ENCODE measurements at regions of chr5 and their contacts with region 1.

Region 1: GRCh38 chr5:141564216-141564692 is 54.5 kb downstream of the DIAPH1 start:
- DNase-seq: peak; percentile 91 to 94 (median 93)
- H3K4me3 ChIP-seq: no peak overlapping the region
- H3K4me3 Mint-ChIP-seq: no peak overlapping the region
- H3K27ac ChIP-seq: peak overlapping the region in 1 of 2 donors; percentile 55
- H3K27ac Mint-ChIP-seq: peak overlapping the region; percentile 37 to 90 (median 84)
- H3K4me1 ChIP-seq: peaks cover 0 to 10% of the 10 kb centered on the region in 2 donors
- H3K4me1 Mint-ChIP-seq: peaks cover 11% of the 10 kb centered on the region
- H3K27me3 ChIP-seq: no peaks in the 10 kb centered on the region
- H3K27me3 Mint-ChIP-seq: no peaks in the 10 kb centered on the region
- CTCF ChIP-seq: peak; percentile 98

Region 2: GRCh38 chr5:141320225-141321169 is 243.8 kb before region 1 on chr5 and contains the start of gene TAF7:
- intact Hi-C with region 1: loop called in 1 of 2 experiments (anchors 2 kb)
- DNase-seq: peak; percentile 89 to 91 (median 91)
- H3K4me3 ChIP-seq: peak within 1 kb of the TSS; percentile 79 to 92 (median 86)
- H3K4me3 Mint-ChIP-seq: peak within 1 kb of the TSS; percentile 89 to 96
- H3K27ac ChIP-seq: peak within 1 kb of the TSS; percentile 92 to 95
- H3K27ac Mint-ChIP-seq: peak within 1 kb of the TSS; percentile 98 to 100 (median 98)
- H3K4me1 ChIP-seq: peaks cover 11 to 16% of the 10 kb centered on the region in 2 donors
- H3K4me1 Mint-ChIP-seq: peaks cover 16% of the 10 kb centered on the region
- H3K27me3 ChIP-seq: peaks cover 0 to 2% of the 10 kb centered on the region in 2 donors
- H3K27me3 Mint-ChIP-seq: peaks cover 2 to 6% (median 5%) of the 10 kb centered on the region in 3 donors
- CTCF ChIP-seq: peak; percentile 87
- polyA plus RNA-seq, gene TAF7: 11.8 to 57.5 (median 52.7) TPM

Region 3: GRCh38 chr5:141359790-141360426 is 204.3 kb before region 1 on chr5 and contains the start of gene PCDHGB2:
- intact Hi-C with region 1: no loop called
- DNase-seq: no peak
- H3K4me3 ChIP-seq: peak within 1 kb of the TSS in 1 of 3 experiments; percentile 36
- H3K4me3 Mint-ChIP-seq: peak within 1 kb of the TSS; percentile 25 to 85
- H3K27ac ChIP-seq: no peak within 1 kb of the TSS
- H3K27ac Mint-ChIP-seq: peak within 1 kb of the TSS in 1 of 7 donors; percentile 57
- H3K4me1 ChIP-seq: no peaks in the 10 kb centered on the region
- H3K4me1 Mint-ChIP-seq: peaks cover 2% of the 10 kb centered on the region
- H3K27me3 ChIP-seq: peaks cover 44 to 91% of the 10 kb centered on the region in 2 donors
- H3K27me3 Mint-ChIP-seq: peaks cover 50 to 72% (median 71%) of the 10 kb centered on the region in 3 donors
- CTCF ChIP-seq: peak; percentile 22
- polyA plus RNA-seq, gene PCDHGB2: 0.01 TPM in 1 of 3 donors, not detected in the others

Region 4: GRCh38 chr5:141412854-141413539 is 151.3 kb before region 1 on chr5 and contains the start of gene PCDHGA10:
- intact Hi-C with region 1: loop called in 1 of 2 experiments (anchors 5 kb)
- DNase-seq: peak; percentile 27 to 44 (median 43)
- H3K4me3 ChIP-seq: peak within 1 kb of the TSS; percentile 3 to 73 (median 33)
- H3K4me3 Mint-ChIP-seq: peak within 1 kb of the TSS; percentile 80 to 88
- H3K27ac ChIP-seq: no peak within 1 kb of the TSS
- H3K27ac Mint-ChIP-seq: no peak within 1 kb of the TSS
- H3K4me1 ChIP-seq: peaks cover 16 to 22% of the 10 kb centered on the region in 2 donors
- H3K4me1 Mint-ChIP-seq: peaks cover 25% of the 10 kb centered on the region
- H3K27me3 ChIP-seq: peaks cover 74 to 100% of the 10 kb centered on the region in 2 donors
- H3K27me3 Mint-ChIP-seq: peaks cover 79 to 86% (median 84%) of the 10 kb centered on the region in 3 donors
- CTCF ChIP-seq: peak; percentile 80
- polyA plus RNA-seq, gene PCDHGA10: not detected

Region 5: DNA sequence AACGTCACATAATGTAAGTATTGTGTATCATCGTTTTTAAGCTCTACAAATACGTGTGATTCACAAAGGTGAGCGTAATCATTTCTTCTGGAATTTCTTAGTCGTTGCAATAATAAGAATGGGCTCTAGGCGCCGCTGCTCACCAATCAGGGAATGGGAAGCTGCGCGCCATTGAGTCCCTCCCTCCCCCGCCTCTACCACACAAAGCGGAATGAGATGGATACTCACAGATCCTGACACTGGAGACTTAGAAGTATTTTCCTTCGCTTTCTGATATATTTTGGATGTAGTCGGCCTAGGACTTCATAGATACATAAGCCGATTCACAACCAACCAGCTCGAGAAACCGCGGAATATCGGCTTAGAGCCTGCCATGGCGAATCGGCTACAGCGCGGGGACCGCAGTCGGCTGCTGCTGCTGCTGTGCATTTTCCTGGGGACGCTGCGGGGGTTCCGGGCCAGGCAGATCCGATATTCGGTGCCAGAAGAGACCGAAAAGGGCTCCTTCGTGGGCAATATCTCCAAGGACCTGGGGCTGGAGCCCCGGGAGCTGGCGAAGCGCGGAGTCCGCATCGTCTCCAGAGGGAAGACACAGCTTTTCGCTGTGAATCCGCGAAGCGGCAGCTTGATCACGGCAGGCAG is 143.3 kb before region 1 on chr5 and contains the start of gene PCDHGA11:
- intact Hi-C with region 1: loop called (anchors 5 kb)
- DNase-seq: peak; percentile 56 to 70 (median 67)
- H3K4me3 ChIP-seq: peak within 1 kb of the TSS; percentile 37 to 77 (median 54)
- H3K4me3 Mint-ChIP-seq: peak within 1 kb of the TSS; percentile 84 to 93
- H3K27ac ChIP-seq: no peak within 1 kb of the TSS
- H3K27ac Mint-ChIP-seq: peak within 1 kb of the TSS in 2 of 7 donors; percentile 41 to 73
- H3K4me1 ChIP-seq: peaks cover 19 to 21% of the 10 kb centered on the region in 2 donors
- H3K4me1 Mint-ChIP-seq: peaks cover 32% of the 10 kb centered on the region
- H3K27me3 ChIP-seq: peaks cover 80 to 100% of the 10 kb centered on the region in 2 donors
- H3K27me3 Mint-ChIP-seq: peaks cover 75 to 88% (median 85%) of the 10 kb centered on the region in 3 donors
- CTCF ChIP-seq: peak; percentile 86
- polyA plus RNA-seq, gene PCDHGA11: not detected

Region 6: DNA sequence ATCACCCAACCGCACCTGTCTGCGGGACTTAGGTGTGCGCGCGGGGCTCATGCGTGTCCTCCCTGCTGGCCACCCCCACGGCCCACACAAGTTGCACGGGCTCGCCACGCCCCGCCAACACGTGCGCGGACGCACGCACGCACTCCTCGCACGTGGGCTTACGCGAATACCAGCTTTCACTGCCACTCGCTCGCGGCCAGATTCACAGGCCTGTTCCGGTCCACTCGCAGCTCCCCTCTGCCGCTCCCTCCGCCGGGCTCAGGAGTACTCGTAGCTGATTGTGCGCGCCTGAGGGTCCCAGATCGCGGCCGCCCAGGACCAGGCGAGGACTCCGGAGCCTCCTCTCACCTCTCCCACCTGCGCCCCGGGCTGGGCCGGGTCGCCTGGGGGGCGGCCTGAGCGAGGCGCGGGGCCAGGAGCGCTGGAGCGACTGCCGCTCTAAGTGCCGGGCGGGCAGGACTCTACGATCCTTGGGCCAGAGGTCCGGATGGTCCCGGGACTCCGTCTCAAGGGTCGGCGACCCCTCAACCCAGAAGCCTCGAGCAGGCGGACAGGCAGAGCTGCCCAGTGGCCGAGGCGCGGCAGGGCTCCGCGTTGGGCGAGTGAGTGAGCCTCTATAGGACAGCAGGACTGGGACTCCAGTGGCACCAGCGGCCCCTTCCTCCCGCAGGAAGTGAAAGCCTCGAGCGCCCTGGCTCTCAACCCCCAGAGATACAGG is 71.9 kb before region 1 on chr5:
- intact Hi-C with region 1: no loop called
- DNase-seq: peak in 2 of 3 donors; percentile 19 to 28
- H3K4me3 ChIP-seq: peak overlapping the region in 1 of 3 experiments; percentile 53
- H3K4me3 Mint-ChIP-seq: peak overlapping the region; percentile 28 to 94
- H3K27ac ChIP-seq: no peak overlapping the region
- H3K27ac Mint-ChIP-seq: peak overlapping the region in 1 of 7 donors; percentile 33
- H3K4me1 ChIP-seq: peaks cover 13 to 15% of the 10 kb centered on the region in 2 donors
- H3K4me1 Mint-ChIP-seq: peaks cover 14% of the 10 kb centered on the region
- H3K27me3 ChIP-seq: peaks cover 38 to 91% of the 10 kb centered on the region in 2 donors
- H3K27me3 Mint-ChIP-seq: peaks cover 73 to 90% (median 78%) of the 10 kb centered on the region in 3 donors
- CTCF ChIP-seq: no peak

Region 7: GRCh38 chr5:141598391-141599350 is 34.4 kb after region 1 on chr5:
- intact Hi-C with region 1: no loop called
- DNase-seq: peak in 1 of 3 donors; percentile 32
- H3K4me3 ChIP-seq: peak overlapping the region in 1 of 3 experiments; percentile 15
- H3K4me3 Mint-ChIP-seq: no peak overlapping the region
- H3K27ac ChIP-seq: peak overlapping the region; percentile 12 to 73
- H3K27ac Mint-ChIP-seq: peak overlapping the region; percentile 65 to 94 (median 88)
- H3K4me1 ChIP-seq: peaks cover 59 to 71% of the 10 kb centered on the region in 2 donors
- H3K4me1 Mint-ChIP-seq: peaks cover 64% of the 10 kb centered on the region
- H3K27me3 ChIP-seq: no peaks in the 10 kb centered on the region
- H3K27me3 Mint-ChIP-seq: no peaks in the 10 kb centered on the region
- CTCF ChIP-seq: no peak

Measured in CD14-positive monocyte (primary cell).